Endothelial cell of umbilical vein (primary cell): ENCODE measurements at regions of chr16 and their contacts with region 1.

Region 1: GRCh38 chr16:30335598-30336474 is 19.3 kb downstream of the CD2BP2 start:
- DNase-seq: no peak
- H3K4me3 ChIP-seq: peak overlapping the region; percentile 23 to 56 (median 54)
- H3K27ac ChIP-seq: no peak overlapping the region
- H3K4me1 ChIP-seq: peaks cover 2% of the 10 kb centered on the region
- H3K27me3 ChIP-seq: no peaks in the 10 kb centered on the region
- CTCF ChIP-seq: no peak
- POLR2A ChIP-seq: no peak

Region 2: GRCh38 chr16:28950648-28951409 is 1385.0 kb before region 1 on chr16 and contains the start of gene NFATC2IP:
- CTCF ChIA-PET with region 1: no interaction called
- POLR2A ChIA-PET with region 1: no interaction called
- dilution Hi-C with region 1: no loop called
- intact Hi-C with region 1: no loop called
- DNase-seq: peak; percentile 100
- H3K4me3 ChIP-seq: peak within 1 kb of the TSS; percentile 79 to 90 (median 89)
- H3K27ac ChIP-seq: peak within 1 kb of the TSS; percentile 48
- H3K4me1 ChIP-seq: peaks cover 11% of the 10 kb centered on the region
- H3K27me3 ChIP-seq: no peaks in the 10 kb centered on the region
- CTCF ChIP-seq: no peak
- POLR2A ChIP-seq: no peak
- total RNA-seq, gene NFATC2IP: 64.8 and 69.6 TPM in 2 replicates

Region 3: GRCh38 chr16:30350134-30350871 is 14.5 kb after region 1 on chr16:
- CTCF ChIA-PET with region 1: no interaction called
- POLR2A ChIA-PET with region 1: no interaction called
- dilution Hi-C with region 1: no loop called
- intact Hi-C with region 1: loop called (anchors 1 kb)
- DNase-seq: no peak
- H3K4me3 ChIP-seq: no peak overlapping the region
- H3K27ac ChIP-seq: no peak overlapping the region
- H3K4me1 ChIP-seq: peaks cover 25% of the 10 kb centered on the region
- H3K27me3 ChIP-seq: no peaks in the 10 kb centered on the region
- CTCF ChIP-seq: no peak
- POLR2A ChIP-seq: no peak

Region 4: GRCh38 chr16:30355144-30355894 is 19.5 kb after region 1 on chr16 and contains the start of gene CD2BP2:
- CTCF ChIA-PET with region 1: no interaction called
- POLR2A ChIA-PET with region 1: no interaction called
- dilution Hi-C with region 1: no loop called
- intact Hi-C with region 1: loop called (anchors 1 kb)
- DNase-seq: peak; percentile 98
- H3K4me3 ChIP-seq: peak within 1 kb of the TSS; percentile 65 to 84 (median 78)
- H3K27ac ChIP-seq: peak within 1 kb of the TSS; percentile 95
- H3K4me1 ChIP-seq: peaks cover 32% of the 10 kb centered on the region
- H3K27me3 ChIP-seq: no peaks in the 10 kb centered on the region
- CTCF ChIP-seq: peak in 1 of 2 donors; percentile 2
- POLR2A ChIP-seq: peak; percentile 57
- total RNA-seq, gene CD2BP2: 75.7 and 76.4 TPM in 2 replicates

Region 5: DNA sequence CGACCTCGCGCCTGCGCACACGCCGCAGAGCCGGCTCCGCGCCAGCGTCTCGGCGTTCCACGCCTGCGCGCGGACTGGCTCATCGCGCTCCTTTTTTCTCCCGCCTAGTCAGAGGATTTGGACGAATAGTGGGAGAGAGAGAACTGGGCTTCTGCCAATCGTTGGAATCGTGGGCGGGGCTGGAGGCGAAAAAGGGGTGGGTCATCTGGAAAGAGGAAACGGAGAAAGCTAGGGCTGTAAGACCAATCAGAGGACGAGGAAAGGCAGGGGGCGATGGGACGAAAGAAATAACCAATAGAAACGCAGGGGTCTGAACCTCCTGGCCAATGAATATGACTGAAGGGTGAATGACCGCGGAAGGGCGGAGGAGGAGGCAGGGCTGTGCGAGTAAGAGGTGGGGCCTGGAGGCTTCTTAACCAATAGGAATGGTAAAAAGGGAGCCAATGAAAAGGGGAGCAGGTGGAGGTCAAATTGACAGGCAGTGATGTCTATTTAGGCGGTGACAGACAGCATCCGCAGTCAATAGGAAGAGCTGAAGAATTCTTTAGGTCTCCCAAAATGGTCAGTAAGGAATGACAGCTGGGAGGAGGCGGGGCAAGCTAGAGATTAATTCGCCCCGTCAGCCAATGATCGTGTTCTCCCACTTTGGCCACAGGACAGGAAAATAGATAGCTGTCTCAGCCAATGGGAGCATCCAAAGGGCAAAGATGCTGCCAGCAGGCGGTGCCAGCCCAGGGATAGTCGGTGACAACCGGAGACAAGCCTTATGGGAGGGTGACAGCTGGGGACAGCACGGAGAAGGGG is 34.8 kb after region 1 on chr16 and contains the start of gene TBC1D10B:
- CTCF ChIA-PET with region 1: no interaction called
- POLR2A ChIA-PET with region 1: interaction called, 3 read pairs
- dilution Hi-C with region 1: no loop called
- intact Hi-C with region 1: loop called (anchors 2 kb)
- DNase-seq: peak; percentile 100
- H3K4me3 ChIP-seq: peak within 1 kb of the TSS; percentile 49 to 83 (median 70)
- H3K27ac ChIP-seq: peak within 1 kb of the TSS; percentile 42
- H3K4me1 ChIP-seq: peaks cover 24% of the 10 kb centered on the region
- H3K27me3 ChIP-seq: no peaks in the 10 kb centered on the region
- CTCF ChIP-seq: peak; percentile 4 to 28
- POLR2A ChIP-seq: no peak
- total RNA-seq, gene TBC1D10B: 57.4 and 63.0 TPM in 2 replicates

Region 6: DNA sequence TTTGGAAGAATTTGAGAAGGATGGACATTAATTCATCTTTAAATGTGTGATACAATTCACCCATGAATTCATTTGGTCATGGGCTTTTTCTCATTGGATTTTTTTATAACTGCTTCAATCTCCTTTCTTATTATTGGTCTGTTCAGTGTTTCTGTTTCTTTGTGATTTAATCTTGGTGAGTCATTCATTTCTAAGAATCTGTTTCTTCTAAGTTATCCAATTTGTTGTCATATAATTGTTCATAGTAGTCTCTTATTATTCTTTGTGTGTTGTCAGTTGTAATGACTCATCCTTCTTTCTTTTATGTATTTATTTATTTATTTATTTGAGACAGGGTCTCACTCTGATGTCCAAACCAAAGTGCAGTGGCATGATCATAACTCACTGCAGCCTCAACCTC is 1391.7 kb after region 1 on chr16:
- CTCF ChIA-PET with region 1: no interaction called
- POLR2A ChIA-PET with region 1: no interaction called
- dilution Hi-C with region 1: no loop called
- intact Hi-C with region 1: no loop called
- DNase-seq: no peak
- H3K4me3 ChIP-seq: no peak overlapping the region
- H3K27ac ChIP-seq: no peak overlapping the region
- H3K4me1 ChIP-seq: no peaks in the 10 kb centered on the region
- H3K27me3 ChIP-seq: no peaks in the 10 kb centered on the region
- CTCF ChIP-seq: no peak
- POLR2A ChIP-seq: no peak